Common myeloid progenitor, CD34-positive (primary cell): ENCODE measurements at regions of chr9 and their contacts with region 1.

Region 1: DNA sequence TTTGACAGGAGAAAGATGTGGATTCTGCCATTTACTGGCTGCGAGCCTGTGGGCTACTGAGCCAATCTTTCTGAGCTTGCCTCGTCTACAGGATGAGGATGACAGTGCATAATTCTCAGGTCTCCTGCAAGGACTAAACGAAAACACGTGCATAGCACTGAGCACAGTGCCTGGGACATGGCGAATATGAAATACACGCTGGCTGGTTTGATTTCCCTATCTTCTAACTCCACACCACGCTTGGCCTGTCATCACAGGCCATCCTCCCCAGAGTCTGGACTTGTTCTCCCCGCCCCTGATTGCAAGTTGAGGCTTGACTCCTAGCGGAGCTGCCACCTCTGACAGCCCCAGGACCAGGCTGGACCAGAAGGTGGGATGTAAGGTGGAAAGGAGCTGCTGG is 37.9 kb downstream of the ARPC5L start:
- DNase-seq: peak in 1 of 3 donors; percentile 8
- H3K4me3 ChIP-seq: no peak overlapping the region
- H3K27ac ChIP-seq: no peak overlapping the region
- H3K4me1 ChIP-seq: no peaks in the 10 kb centered on the region
- H3K27me3 ChIP-seq: no peaks in the 10 kb centered on the region

Region 2: GRCh38 chr9:124889006-124889405 is 10.8 kb before region 1 on chr9:
- CTCF ChIA-PET with region 1: interaction called, 16 read pairs
- POLR2A ChIA-PET with region 1: no interaction called
- DNase-seq: no peak
- H3K4me3 ChIP-seq: peak overlapping the region in 1 of 7 experiments; percentile 11
- H3K27ac ChIP-seq: no peak overlapping the region
- H3K4me1 ChIP-seq: no peaks in the 10 kb centered on the region
- H3K27me3 ChIP-seq: no peaks in the 10 kb centered on the region